ENCODE measurements at regions of chr16 and their contacts with region 1.

Region 1: DNA sequence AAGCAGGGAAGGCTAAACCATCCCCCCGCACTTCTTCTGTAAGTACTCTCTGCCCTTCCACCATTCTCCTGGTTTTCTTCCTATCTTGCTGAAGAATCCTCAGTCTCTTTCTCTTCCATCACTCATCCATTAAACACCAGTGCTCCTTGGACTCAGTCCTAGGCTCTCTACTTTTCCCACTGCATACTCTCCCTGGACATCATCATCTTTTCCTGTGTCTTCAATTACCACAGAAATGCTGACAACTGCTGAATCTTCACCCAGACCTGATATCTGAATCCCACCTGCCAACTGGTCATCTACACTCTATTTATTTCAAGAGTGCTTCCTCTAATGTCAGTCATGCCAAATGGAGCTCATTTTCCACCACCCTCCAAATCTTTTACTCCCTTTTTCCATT is 53.8 kb upstream of the ARL6IP1 start:
- DNase-seq: no peak
- H3K4me3 ChIP-seq: no peak overlapping the region
- H3K27ac ChIP-seq: no peak overlapping the region
- H3K4me1 ChIP-seq: no peaks in the 10 kb centered on the region
- H3K27me3 ChIP-seq: no peaks in the 10 kb centered on the region
- CTCF ChIP-seq: no peak

Region 2: DNA sequence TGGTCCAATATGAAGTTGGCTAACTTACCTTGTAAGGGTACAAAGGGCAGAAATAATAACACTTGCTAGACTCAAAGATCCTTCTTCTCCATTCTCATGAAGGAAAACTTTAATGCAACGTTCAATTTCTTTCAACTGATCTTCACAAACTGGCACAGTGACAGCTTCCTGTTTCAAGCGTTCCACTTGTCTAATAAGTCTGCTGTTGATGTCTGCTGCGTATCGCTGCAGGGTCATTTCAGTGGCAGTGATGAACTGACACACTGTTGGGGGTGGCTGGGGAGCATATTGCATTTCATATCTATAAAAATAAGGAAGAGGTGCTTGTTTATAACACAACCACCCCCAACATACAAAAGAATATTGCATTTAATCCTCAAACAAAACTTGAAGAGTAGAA is 20.3 kb before region 1 on chr16:
- CTCF ChIA-PET with region 1: no interaction called
- POLR2A ChIA-PET with region 1: no interaction called
- intact Hi-C with region 1: no loop called
- DNase-seq: no peak
- H3K4me3 ChIP-seq: no peak overlapping the region
- H3K27ac ChIP-seq: no peak overlapping the region
- H3K4me1 ChIP-seq: no peaks in the 10 kb centered on the region
- H3K27me3 ChIP-seq: no peaks in the 10 kb centered on the region
- CTCF ChIP-seq: no peak

Region 3: DNA sequence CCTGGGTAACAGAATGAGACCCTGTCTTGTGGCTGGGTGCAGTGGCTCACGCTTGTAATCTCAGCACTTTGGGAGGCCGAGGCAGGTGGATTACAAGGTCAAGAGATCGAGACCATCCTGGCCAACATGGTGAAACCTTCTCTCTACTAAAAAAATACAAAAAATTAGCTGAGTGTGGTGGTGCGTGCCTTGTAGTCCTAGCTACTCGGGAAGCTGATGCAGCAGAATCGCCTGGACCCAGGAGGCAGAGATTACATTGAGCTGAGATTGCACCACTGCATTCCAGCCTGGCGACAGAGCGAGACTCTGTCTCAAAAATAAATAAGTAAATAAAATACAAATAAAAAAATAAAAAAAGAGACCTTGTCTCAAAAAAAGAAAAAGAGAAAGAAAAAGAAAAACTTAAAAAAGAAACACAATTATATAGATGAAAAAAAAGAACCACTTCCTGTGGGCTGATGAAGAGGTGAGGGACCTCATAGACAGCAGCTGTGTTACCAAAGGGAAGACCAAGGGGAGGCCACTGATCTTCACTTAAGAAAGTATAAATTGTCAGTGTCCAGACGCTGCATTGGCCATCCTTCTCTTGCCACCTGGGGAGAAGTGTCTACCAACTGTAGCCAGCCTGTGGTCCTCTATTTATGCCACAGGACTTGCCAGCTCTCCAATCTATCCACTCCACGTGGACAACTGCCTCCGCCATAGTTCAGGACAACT is 95.4 kb after region 1 on chr16:
- CTCF ChIA-PET with region 1: no interaction called
- POLR2A ChIA-PET with region 1: no interaction called
- intact Hi-C with region 1: no loop called
- DNase-seq: no peak
- H3K4me3 ChIP-seq: no peak overlapping the region
- H3K27ac ChIP-seq: no peak overlapping the region
- H3K4me1 ChIP-seq: no peaks in the 10 kb centered on the region
- H3K27me3 ChIP-seq: no peaks in the 10 kb centered on the region
- CTCF ChIP-seq: no peak

Region 4: DNA sequence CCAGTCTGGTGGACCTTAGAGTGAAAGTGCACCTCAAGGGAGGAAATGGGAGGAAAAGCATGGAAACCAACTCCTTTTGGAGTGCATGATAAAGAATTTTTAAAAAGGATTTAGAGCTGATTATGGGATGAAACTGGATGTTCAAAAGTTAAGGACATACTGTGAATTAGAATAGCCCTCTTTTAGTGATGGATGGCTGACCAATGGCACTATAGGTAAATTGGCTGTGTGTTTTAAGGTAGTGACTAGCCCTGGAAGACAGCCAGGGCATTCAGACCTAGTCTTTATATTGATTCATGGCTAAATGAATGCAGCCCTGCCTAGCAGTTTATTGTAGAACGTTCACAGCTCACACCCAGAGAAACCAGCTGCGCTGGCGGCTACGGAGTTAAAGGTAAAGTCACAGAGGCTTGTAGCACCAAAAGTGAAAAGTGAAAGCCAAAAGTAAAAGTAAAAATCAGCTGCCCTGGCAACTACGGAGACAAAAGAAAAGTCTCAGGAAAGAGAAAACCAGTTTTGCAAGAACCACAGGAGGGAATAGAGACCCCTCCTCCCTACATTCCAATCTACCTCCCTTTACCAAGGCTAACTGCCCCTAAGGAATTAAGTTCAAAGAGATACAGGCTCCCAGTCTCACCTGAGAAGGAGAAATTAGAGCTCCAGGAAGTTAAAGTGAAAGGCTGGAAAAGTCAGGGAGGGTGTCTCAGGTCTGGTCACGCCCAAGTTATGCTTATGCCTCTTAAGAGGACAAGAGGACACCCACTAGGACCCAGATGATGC is 1820.5 kb after region 1 on chr16:
- CTCF ChIA-PET with region 1: no interaction called
- POLR2A ChIA-PET with region 1: interaction called, 14 read pairs
- intact Hi-C with region 1: no loop called
- DNase-seq: peak; percentile 76 to 95
- H3K4me3 ChIP-seq: peak overlapping the region; percentile 47; the same call in 1 of the 2 replicates
- H3K27ac ChIP-seq: peak overlapping the region; percentile 45
- H3K4me1 ChIP-seq: peaks cover 36% of the 10 kb centered on the region
- H3K27me3 ChIP-seq: no peaks in the 10 kb centered on the region
- CTCF ChIP-seq: no peak